ENCODE measurements at regions of chr10 and their contacts with region 1.

Region 1: GRCh38 chr10:23516530-23516929 is 77.7 kb downstream of the OTUD1 start:
- H3K4me3 Mint-ChIP-seq: no peak overlapping the region
- H3K27ac Mint-ChIP-seq: no peak overlapping the region
- H3K4me1 Mint-ChIP-seq: peaks cover 49% of the 10 kb centered on the region
- H3K27me3 Mint-ChIP-seq: peaks cover 3% of the 10 kb centered on the region

Region 2: DNA sequence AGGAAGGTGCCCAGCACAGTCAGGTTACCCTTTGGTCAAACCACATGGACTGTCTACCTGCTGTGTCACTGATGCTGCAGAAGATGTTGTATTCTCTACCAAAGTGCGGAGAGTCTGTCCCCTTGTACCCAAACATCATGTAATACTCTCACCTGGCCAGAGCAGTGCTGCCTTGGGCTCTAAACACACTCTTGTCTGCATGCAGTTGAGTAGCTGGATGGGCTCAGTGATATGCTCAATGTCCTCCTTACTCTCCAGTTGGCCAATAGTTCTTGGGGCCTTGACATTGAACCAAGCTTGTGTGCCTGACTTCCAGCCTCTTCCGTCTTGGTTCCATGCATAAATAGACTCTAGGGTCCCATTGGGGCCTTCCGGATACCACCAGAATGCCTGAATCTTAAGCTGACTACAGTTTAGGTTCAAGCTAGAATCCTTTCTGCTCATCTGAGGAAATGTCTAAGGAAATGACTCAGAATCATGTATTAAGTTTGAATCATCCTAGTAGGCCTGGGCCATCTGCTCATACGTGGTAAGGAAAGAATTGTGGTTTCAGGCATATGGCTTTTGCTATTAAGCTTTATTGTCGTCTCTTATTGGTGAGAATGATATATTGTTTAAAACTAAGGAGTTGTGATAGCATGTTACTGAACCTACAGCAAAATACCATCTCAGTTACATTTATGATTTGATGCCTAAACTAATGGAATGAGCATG is 40.4 kb after region 1 on chr10:
- intact Hi-C with region 1: no loop called
- H3K4me3 Mint-ChIP-seq: no peak overlapping the region
- H3K27ac Mint-ChIP-seq: no peak overlapping the region
- H3K4me1 Mint-ChIP-seq: peaks cover 13% of the 10 kb centered on the region
- H3K27me3 Mint-ChIP-seq: no peaks in the 10 kb centered on the region

Region 3: GRCh38 chr10:23656735-23657134 is 140.2 kb after region 1 on chr10:
- intact Hi-C with region 1: loop called (anchors 5 kb)
- H3K4me3 Mint-ChIP-seq: no peak overlapping the region
- H3K27ac Mint-ChIP-seq: no peak overlapping the region
- H3K4me1 Mint-ChIP-seq: peaks cover 6% of the 10 kb centered on the region
- H3K27me3 Mint-ChIP-seq: peaks cover 25% of the 10 kb centered on the region

Region 4: GRCh38 chr10:23702977-23703414 is 186.5 kb after region 1 on chr10:
- intact Hi-C with region 1: loop called (anchors 5 kb)
- H3K4me3 Mint-ChIP-seq: no peak overlapping the region
- H3K27ac Mint-ChIP-seq: no peak overlapping the region
- H3K4me1 Mint-ChIP-seq: peaks cover 4% of the 10 kb centered on the region
- H3K27me3 Mint-ChIP-seq: peaks cover 12% of the 10 kb centered on the region